ENCODE measurements at regions of chr6 and their contacts with region 1.

Region 1: GRCh38 chr6:100116411-100117194 is 122.6 kb upstream of the MCHR2 start:
- DNase-seq: peak; percentile 59

Region 2: DNA sequence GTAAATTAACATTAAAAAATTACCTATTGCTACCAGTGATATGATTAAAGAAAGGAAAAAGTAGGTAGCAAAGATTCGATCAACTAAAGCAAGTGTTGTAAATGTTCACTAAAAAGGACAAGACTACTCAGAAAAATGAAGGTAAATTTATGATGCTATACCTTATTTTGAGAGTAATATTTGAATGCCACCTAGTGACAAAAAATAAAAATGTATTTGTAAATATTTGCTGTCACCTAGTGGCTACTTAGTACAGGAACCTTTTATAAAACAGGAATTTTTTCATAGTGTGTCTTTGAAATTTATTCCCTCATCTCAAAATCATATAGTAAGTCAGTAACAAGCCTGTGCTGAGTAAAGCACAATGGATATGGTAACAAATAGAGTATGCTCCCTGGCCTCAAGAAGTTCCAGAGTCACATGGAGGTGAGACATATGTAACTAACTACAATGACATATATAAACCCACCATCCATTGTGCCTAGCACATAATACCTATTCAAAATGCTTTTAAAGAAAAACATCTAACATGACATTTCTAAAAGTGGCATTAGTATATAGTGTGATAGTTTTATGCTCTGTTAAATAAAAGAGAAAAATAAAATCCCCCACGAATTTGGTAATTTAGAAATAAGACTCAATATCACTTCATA is 541.2 kb after region 1 on chr6:
- in situ Hi-C with region 1: loop called (anchors 10 kb)
- DNase-seq: peak; percentile 32